Activated CD8-positive, alpha-beta memory T cell treated with anti-CD3 and anti-CD28 coated beads, Interleukin-2, amount 10 ng/mL, durations not matched to agents 7 days and 5 days (primary cell): ENCODE measurements at regions of chr20 and their contacts with region 1.

Region 1: GRCh38 chr20:34516247-34517113 is at the start of gene DYNLRB1:
- DNase-seq: peak; percentile 98
- ATAC-seq: peak; percentile 89
- H3K4me3 Mint-ChIP-seq: peak within 1 kb of the TSS; percentile 96
- H3K27ac Mint-ChIP-seq: peak within 1 kb of the TSS; percentile 97
- H3K4me1 Mint-ChIP-seq: peaks cover 28% of the 10 kb centered on the region
- H3K27me3 Mint-ChIP-seq: no peaks in the 10 kb centered on the region
- total RNA-seq, gene DYNLRB1: 88.5 to 93.6 TPM

Region 2: DNA sequence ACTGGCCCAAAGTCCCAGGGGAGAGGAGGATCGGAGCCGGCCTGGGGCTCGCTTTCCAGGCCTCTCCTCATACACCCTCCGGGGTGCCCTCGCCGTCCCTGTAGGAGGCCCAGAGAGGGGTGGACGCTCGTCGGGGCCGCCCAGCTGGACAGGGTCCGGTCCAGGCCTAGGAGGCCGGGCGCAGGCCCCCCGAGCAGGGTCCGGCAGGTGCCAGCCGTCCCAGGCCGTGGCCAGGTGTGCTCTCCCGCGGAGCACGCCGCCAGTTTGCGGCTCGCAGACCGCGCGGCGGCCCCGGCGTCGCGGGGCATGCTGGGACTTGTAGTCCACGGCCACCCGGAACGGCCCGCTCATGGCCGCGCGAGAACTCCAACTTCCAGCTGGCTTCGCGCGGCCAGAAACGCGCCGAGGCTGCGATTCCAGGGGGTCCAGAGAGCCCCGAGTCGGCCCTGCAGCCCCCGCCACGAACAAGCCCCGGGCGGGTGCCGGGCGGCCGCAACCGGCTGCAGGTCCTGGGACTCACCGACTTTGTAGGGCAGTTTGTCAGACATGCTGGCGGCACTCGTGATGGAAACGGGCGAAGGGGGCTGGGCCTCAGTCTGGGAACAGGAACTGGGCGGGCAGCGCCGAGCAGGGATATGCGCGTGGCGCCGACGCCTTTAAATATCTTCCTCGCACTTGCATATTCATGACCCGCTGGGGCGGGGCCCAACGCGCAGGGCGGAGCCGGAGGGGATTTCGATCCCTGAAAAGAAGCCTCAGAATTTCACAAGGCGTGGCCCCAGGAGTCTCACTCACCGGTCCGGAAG is 213.6 kb before region 1 on chr20 and contains the start of gene AHCY:
- CTCF ChIA-PET with region 1: interaction called, 17 read pairs
- DNase-seq: peak; percentile 97
- ATAC-seq: peak; percentile 97
- H3K4me3 Mint-ChIP-seq: peak within 1 kb of the TSS; percentile 84
- H3K27ac Mint-ChIP-seq: peak within 1 kb of the TSS; percentile 86
- H3K4me1 Mint-ChIP-seq: peaks cover 25% of the 10 kb centered on the region
- H3K27me3 Mint-ChIP-seq: peaks cover 7% of the 10 kb centered on the region
- total RNA-seq, gene AHCY: 74.3 to 95.5 TPM

Region 3: DNA sequence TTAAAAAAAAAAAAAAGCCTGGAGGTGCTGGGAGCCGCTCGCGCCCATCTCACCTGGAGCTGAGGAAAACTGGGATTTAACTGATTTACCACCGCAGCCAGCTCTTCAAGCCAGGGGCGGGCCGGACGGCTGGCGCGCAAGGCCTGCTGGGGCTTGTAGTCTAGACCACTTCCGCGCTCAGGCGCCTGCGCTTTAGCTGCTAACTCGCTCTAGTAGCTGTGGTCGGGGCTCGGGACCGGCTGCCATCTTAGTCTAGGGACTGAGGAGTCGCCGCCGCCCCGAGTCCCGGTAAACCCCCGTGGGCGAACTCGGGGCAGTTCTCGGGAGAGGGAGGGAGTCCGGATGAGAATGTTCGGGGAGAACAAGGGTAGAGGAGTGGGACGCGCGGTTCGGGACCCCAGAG is 153.4 kb before region 1 on chr20 and contains the start of gene ITCH:
- CTCF ChIA-PET with region 1: interaction called, 10 read pairs
- DNase-seq: peak; percentile 96
- ATAC-seq: peak; percentile 98
- H3K4me3 Mint-ChIP-seq: peak within 1 kb of the TSS; percentile 94
- H3K27ac Mint-ChIP-seq: peak within 1 kb of the TSS; percentile 98
- H3K4me1 Mint-ChIP-seq: peaks cover 39% of the 10 kb centered on the region
- H3K27me3 Mint-ChIP-seq: no peaks in the 10 kb centered on the region
- total RNA-seq, gene ITCH: 51.6 to 57.9 TPM

Region 4: GRCh38 chr20:34538671-34539123 is 22.2 kb after region 1 on chr20:
- CTCF ChIA-PET with region 1: interaction called, 12 read pairs
- DNase-seq: peak; percentile 65
- ATAC-seq: peak; percentile 42
- H3K4me3 Mint-ChIP-seq: no peak overlapping the region
- H3K27ac Mint-ChIP-seq: no peak overlapping the region
- H3K4me1 Mint-ChIP-seq: peaks cover 9% of the 10 kb centered on the region
- H3K27me3 Mint-ChIP-seq: no peaks in the 10 kb centered on the region

Region 5: GRCh38 chr20:34562643-34563042 is 46.2 kb after region 1 on chr20:
- CTCF ChIA-PET with region 1: no interaction called
- DNase-seq: no peak
- ATAC-seq: no peak
- H3K4me3 Mint-ChIP-seq: no peak overlapping the region
- H3K27ac Mint-ChIP-seq: no peak overlapping the region
- H3K4me1 Mint-ChIP-seq: peaks cover 5% of the 10 kb centered on the region
- H3K27me3 Mint-ChIP-seq: no peaks in the 10 kb centered on the region

Region 6: DNA sequence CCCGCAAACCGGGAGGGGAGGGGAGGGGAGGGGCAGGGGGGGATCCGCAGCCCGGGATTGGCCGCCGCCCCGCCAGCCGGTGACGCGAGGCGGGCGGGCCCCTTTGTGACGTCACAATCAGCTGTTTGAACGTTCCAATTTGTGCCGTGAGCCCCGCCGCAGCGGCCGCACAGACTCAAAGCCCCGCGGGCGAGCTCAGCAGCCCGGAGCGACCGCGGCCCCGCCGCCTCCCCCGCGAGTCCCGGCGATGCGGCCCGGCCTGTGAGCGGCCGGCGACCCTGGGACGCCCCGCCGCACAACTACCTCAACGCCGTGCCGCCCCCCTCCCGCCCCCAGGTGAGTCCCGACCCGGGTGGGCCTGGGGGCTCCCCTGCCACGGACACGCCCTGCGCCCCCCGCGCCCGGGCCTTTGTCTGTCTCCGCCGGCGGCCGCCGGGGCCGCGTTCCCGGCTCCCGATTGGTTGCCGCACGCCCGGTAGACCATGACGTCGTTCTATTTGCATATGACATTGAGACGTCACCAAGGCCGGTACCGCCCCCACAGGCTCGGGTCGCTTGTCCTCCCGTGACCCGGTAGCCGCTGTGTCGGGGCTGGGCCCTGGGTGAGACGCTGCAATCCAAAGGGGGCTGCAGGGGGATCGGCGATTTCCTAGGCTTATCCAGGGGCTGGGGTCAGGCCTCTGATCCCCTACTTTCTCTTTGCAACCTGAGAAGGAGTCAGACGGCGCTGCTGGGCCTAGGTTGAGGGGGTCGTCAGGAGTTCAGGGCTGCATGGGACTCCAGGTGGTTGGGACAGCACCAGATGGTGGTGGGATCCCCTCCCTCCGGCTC is 187.9 kb after region 1 on chr20 and contains the start of gene TP53INP2:
- CTCF ChIA-PET with region 1: interaction called, 13 read pairs
- DNase-seq: peak; percentile 93
- ATAC-seq: peak; percentile 65
- H3K4me3 Mint-ChIP-seq: peak within 1 kb of the TSS; percentile 83
- H3K27ac Mint-ChIP-seq: peak within 1 kb of the TSS; percentile 85
- H3K4me1 Mint-ChIP-seq: peaks cover 22% of the 10 kb centered on the region
- H3K27me3 Mint-ChIP-seq: peaks cover 19% of the 10 kb centered on the region
- total RNA-seq, gene TP53INP2: 1.4 to 2.4 TPM